Activated T-helper 2 cell treated with anti-CD3 and anti-CD28 coated beads, Interferon-gamma antibody, Interleukin-2, Interleukin-4, amounts not matched to agents 10 μg/mL and 5 μg/mL and 100 μg/mL, durations not matched to agents 14 hours and 24 hours and 36 hours (primary cell): ENCODE measurements at regions of chr11 and their contacts with region 1.

Region 1: GRCh38 chr11:124953753-124954589 is at the start of gene CCDC15:
- DNase-seq: peak; percentile 94
- H3K4me3 Mint-ChIP-seq: no peak within 1 kb of the TSS
- H3K27ac Mint-ChIP-seq: no peak within 1 kb of the TSS
- H3K4me1 Mint-ChIP-seq: peaks cover 21% of the 10 kb centered on the region
- H3K27me3 Mint-ChIP-seq: no peaks in the 10 kb centered on the region
- total RNA-seq, gene CCDC15: 3.6 and 3.7 TPM in 2 replicates

Region 2: GRCh38 chr11:124622531-124623451 is 331.2 kb before region 1 on chr11 and contains the start of gene TBRG1:
- intact Hi-C with region 1: loop called (anchors 5 kb)
- DNase-seq: peak; percentile 78
- H3K4me3 Mint-ChIP-seq: peak within 1 kb of the TSS; percentile 96
- H3K27ac Mint-ChIP-seq: peak within 1 kb of the TSS; percentile 92
- H3K4me1 Mint-ChIP-seq: peaks cover 25% of the 10 kb centered on the region
- H3K27me3 Mint-ChIP-seq: peaks cover 24% of the 10 kb centered on the region
- total RNA-seq, gene TBRG1: 36.1 and 37.4 TPM in 2 replicates

Region 3: DNA sequence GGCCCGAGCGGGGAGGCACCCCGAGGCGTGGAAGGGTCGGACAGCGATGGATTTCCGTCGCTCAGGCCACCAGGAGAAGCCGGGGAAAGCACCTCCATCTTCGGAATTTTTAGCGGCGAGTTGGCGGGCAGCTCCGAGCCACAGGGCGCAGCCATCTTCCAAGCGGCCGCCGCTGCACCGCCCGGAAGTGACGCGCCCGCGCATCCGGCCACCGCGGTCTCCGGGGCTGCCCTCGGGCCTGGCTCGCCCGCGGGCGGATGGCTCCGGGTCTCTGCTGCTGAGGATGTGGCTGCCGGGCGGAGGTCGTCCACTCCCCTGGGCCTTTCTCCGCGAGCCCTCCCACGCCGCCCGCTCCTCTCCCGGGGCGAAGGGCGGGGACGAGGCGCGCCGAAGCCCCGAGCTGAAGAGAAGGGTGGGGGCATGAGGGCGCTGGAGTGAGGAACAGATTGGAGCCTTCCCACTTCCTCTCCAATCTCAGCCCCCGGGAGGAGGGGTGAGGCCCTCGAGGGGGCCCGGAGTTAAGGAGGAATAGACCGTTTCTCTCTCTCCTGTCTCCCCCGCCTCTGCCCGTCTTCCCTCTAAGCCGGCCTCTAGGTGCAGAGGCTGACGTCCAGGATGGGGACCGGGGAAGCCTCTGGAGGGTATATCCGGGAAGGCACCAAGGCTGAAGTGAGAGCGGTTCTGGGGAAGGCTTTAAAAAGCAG is 153.6 kb before region 1 on chr11 and contains the start of gene MSANTD2:
- intact Hi-C with region 1: loop called (anchors 1 kb)
- DNase-seq: peak; percentile 76
- H3K4me3 Mint-ChIP-seq: peak within 1 kb of the TSS; percentile 92
- H3K27ac Mint-ChIP-seq: peak within 1 kb of the TSS; percentile 80
- H3K4me1 Mint-ChIP-seq: peaks cover 27% of the 10 kb centered on the region
- H3K27me3 Mint-ChIP-seq: peaks cover 11% of the 10 kb centered on the region
- total RNA-seq, gene MSANTD2: 10.5 and 10.8 TPM in 2 replicates

Region 4: DNA sequence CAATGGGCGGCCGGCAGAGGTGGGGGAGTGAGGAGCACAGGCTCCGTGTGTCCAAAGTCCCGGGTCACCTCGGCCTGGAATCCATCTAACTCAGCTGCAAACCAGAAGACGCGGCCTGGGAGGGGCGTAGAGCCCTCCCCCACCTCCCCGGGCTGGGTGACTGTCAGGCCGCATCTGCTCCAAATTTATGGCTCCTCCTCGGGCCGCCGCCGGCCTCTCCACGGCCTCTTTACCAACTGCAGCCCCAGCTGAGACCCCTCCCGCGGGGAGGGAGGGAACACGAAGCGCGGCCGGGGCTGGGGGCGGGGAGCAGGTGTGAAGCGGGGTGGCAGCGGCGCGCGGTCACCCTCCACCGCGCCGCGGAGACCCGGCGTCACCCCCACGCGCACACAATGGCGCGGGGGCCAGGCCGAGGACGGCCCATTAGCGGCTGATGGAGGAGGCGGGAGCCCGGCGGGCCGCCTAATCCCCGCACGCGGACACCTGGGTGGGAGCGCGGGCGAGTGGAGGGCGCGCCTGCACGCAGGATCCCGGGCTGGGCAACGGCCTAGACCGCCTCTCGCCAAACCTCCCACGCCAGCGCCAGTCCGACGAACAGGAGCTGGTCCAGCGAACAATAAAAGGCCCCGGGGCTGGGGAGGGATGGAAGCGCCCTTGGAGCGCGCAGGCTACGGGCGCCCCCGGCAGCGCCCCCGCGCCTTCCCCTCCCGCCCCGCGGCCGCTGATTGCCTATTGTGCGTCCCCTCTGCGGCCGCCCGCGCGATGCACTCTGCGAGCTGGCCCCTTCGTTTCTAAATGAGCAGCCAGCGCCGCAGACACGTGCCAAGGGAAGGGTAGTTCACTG is 114.6 kb before region 1 on chr11:
- intact Hi-C with region 1: no loop called
- DNase-seq: no peak
- H3K4me3 Mint-ChIP-seq: no peak overlapping the region
- H3K27ac Mint-ChIP-seq: no peak overlapping the region
- H3K4me1 Mint-ChIP-seq: peaks cover 14% of the 10 kb centered on the region
- H3K27me3 Mint-ChIP-seq: peaks cover 69% of the 10 kb centered on the region

Region 5: GRCh38 chr11:124875943-124876817 is 77.8 kb before region 1 on chr11:
- intact Hi-C with region 1: loop called (anchors 1 kb)
- DNase-seq: peak; percentile 76
- H3K4me3 Mint-ChIP-seq: peak overlapping the region; percentile 82
- H3K27ac Mint-ChIP-seq: peak overlapping the region; percentile 86
- H3K4me1 Mint-ChIP-seq: peaks cover 12% of the 10 kb centered on the region
- H3K27me3 Mint-ChIP-seq: peaks cover 42% of the 10 kb centered on the region

Region 6: GRCh38 chr11:125111343-125112207 is 157.6 kb after region 1 on chr11 and contains the start of gene TMEM218:
- intact Hi-C with region 1: loop called (anchors 1 kb)
- DNase-seq: peak; percentile 97
- H3K4me3 Mint-ChIP-seq: peak within 1 kb of the TSS; percentile 100
- H3K27ac Mint-ChIP-seq: peak within 1 kb of the TSS; percentile 100
- H3K4me1 Mint-ChIP-seq: peaks cover 22% of the 10 kb centered on the region
- H3K27me3 Mint-ChIP-seq: peaks cover 6% of the 10 kb centered on the region
- total RNA-seq, gene TMEM218: 17.9 and 18.1 TPM in 2 replicates

Region 7: GRCh38 chr11:125592305-125593112 is 638.5 kb after region 1 on chr11 and contains the start of gene STT3A:
- intact Hi-C with region 1: loop called (anchors 10 kb)
- DNase-seq: peak; percentile 97
- H3K4me3 Mint-ChIP-seq: peak within 1 kb of the TSS; percentile 99
- H3K27ac Mint-ChIP-seq: peak within 1 kb of the TSS; percentile 92
- H3K4me1 Mint-ChIP-seq: peaks cover 38% of the 10 kb centered on the region
- H3K27me3 Mint-ChIP-seq: no peaks in the 10 kb centered on the region
- total RNA-seq, gene STT3A: 187 and 198 TPM in 2 replicates